OCI-LY7 (cell line): ENCODE measurements at regions of chr2 and their contacts with region 1.

Region 1: DNA sequence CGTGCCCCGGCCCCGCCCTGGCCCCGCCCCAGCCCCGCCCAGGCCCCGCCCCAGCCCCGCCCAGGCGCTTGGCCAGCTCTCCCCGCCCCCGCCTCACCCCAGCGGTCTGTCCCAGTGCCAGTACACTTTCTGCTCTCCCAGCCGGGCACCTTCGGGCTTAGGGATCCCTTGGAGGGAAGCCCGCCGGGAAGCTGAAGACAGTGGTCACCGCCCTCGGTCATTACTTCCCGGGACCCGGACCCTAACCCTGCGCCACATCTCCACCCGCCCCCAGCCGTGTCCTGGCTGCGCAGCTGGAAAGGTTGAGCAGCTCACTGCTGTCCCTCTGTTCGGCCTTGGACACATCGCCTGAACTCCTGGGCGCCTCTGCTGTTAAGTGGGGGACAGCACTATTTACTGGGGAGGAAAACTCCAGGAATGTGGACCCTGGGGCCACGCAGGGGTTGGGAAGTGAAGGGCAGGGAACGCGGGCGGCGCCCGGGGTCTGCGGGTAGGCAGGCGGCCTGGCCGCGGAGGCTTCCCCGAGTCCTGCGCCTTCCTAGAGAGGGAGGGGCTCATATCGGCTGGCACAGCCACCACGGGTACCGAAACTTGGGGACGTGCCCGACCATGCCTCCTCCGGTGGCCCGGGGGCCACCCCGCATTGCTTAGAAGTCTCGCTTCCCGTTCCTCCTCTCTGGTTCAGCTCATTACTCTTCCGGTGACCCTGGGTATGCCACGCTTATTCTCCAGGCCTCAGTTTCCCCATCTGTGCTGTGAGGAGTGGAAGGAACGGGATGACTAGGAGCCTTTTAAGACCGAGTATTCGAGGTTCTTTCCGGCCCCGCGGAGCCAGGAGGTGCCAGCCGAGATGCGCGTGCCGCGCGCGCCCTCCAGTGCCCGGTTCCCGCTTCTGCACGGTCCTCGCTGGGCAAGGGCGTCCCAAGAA is 121.0 kb downstream of the GYPC start:
- DNase-seq: peak; percentile 73
- H3K4me3 ChIP-seq: peak overlapping the region; percentile 62
- H3K27ac ChIP-seq: no peak overlapping the region
- H3K4me1 ChIP-seq: peaks cover 7% of the 10 kb centered on the region
- CTCF ChIP-seq: peak; percentile 98

Region 2: DNA sequence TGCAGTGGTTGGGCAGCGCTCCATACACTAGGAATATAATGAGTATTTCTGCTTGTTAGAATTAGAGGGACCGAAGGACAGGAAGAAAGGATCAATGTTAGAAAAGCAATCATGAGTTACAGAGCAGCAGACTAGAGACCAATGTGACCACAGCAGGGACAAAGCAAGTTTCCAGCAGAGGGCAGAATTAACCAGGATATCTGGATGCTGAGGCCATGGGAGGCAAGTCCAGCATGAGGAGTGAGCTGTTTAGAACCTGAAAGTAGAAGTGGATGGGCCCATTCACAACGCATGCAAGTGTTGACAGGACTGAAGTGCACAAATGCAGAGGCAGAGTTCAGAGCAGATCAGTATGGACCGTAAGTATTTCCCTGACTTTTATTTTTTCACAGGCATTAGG is 1031.4 kb before region 1 on chr2:
- CTCF ChIA-PET with region 1: no interaction called
- POLR2A ChIA-PET with region 1: no interaction called
- intact Hi-C with region 1: loop called (anchors 10 kb)
- DNase-seq: peak; percentile 1
- H3K4me3 ChIP-seq: no peak overlapping the region
- H3K27ac ChIP-seq: no peak overlapping the region
- H3K4me1 ChIP-seq: no peaks in the 10 kb centered on the region
- CTCF ChIP-seq: peak; percentile 40; the same call in 1 of the 2 replicates

Region 3: DNA sequence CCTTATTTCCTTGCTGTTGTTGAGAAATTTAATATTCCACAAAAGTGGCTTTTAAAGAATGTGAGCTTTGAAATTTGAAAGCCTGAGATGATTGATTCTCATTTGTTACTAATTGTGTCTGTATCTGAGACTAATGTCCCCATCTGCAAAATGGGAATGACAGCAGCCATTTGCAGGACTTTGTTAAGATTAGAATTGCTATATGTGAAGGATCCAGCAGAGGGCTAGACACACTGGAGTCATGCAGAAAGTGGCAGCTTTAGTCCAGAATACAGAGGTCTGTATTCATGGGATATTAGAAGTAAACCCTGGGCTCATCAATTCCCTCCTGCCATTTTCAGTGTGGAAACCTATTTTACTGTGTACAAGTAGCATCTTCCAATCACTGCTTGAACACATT is 417.5 kb before region 1 on chr2:
- CTCF ChIA-PET with region 1: no interaction called
- POLR2A ChIA-PET with region 1: no interaction called
- intact Hi-C with region 1: loop called (anchors 1 kb)
- DNase-seq: peak; percentile 46
- H3K4me3 ChIP-seq: no peak overlapping the region
- H3K27ac ChIP-seq: no peak overlapping the region
- H3K4me1 ChIP-seq: no peaks in the 10 kb centered on the region
- CTCF ChIP-seq: peak; percentile 75

Region 4: GRCh38 chr2:126399001-126399400 is 378.0 kb before region 1 on chr2:
- CTCF ChIA-PET with region 1: no interaction called
- POLR2A ChIA-PET with region 1: no interaction called
- intact Hi-C with region 1: loop called (anchors 1 kb)
- DNase-seq: peak; percentile 21
- H3K4me3 ChIP-seq: no peak overlapping the region
- H3K27ac ChIP-seq: no peak overlapping the region
- H3K4me1 ChIP-seq: no peaks in the 10 kb centered on the region
- CTCF ChIP-seq: peak; percentile 65

Region 5: GRCh38 chr2:126527836-126528507 is 249.0 kb before region 1 on chr2:
- CTCF ChIA-PET with region 1: interaction called, 3 read pairs
- POLR2A ChIA-PET with region 1: interaction called, 4 read pairs
- intact Hi-C with region 1: loop called (anchors 1 kb)
- DNase-seq: peak; percentile 65
- H3K4me3 ChIP-seq: no peak overlapping the region
- H3K27ac ChIP-seq: no peak overlapping the region
- H3K4me1 ChIP-seq: no peaks in the 10 kb centered on the region
- CTCF ChIP-seq: peak; percentile 84

Region 6: GRCh38 chr2:126634273-126634861 is 142.6 kb before region 1 on chr2:
- CTCF ChIA-PET with region 1: interaction called, 3 read pairs
- POLR2A ChIA-PET with region 1: no interaction called
- intact Hi-C with region 1: loop called (anchors 10 kb)
- DNase-seq: peak; percentile 29
- H3K4me3 ChIP-seq: no peak overlapping the region
- H3K27ac ChIP-seq: no peak overlapping the region
- H3K4me1 ChIP-seq: peaks cover 6% of the 10 kb centered on the region
- CTCF ChIP-seq: peak; percentile 85

Region 7: DNA sequence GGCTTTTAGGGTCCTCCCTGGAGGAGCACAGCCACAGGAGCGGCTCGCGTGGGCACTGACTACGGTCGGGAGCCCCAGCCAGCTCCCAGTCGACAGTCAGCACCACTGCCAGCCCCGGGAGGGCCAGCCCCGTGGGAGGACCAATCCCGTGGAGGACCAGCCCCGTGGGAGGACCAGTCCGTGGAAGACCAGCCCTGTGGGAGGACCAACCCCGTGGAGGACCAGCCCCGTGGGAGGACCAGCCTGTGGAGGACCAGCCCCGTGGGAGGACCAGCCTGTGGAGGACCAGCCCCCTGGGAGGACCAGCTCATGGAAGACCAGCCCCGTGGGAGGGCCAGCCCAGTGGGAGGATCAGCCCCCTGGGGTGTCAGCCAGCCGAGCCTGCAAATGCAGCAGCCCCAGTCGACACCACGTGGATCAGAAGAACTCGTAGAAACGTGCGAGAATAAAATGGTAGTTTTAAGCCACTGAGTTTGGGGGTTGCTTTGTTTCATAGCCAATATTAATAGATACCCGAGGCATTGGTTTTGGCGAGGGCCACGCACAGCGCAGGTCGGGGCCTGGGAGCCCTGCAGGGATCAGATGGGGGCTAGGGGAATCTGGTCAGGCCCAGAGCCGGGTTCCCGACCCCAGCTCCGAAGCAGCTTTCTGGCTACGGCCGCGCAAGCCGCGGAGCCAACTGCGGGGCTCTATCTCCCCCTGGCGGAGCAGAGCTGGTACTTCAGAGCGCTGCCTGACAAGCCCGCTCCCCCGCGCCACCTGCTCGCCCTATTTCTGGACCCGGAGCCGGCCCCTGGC is 194.7 kb after region 1 on chr2:
- CTCF ChIA-PET with region 1: no interaction called
- POLR2A ChIA-PET with region 1: no interaction called
- intact Hi-C with region 1: loop called (anchors 10 kb)
- DNase-seq: peak; percentile 55
- H3K4me3 ChIP-seq: no peak overlapping the region
- H3K27ac ChIP-seq: no peak overlapping the region
- H3K4me1 ChIP-seq: no peaks in the 10 kb centered on the region
- CTCF ChIP-seq: peak; percentile 89